Heart left ventricle (tissue), 16 donors: ENCODE measurements at regions of chr1 and their contacts with region 1.

Region 1: GRCh38 chr1:61825393-61825792 is 83.1 kb downstream of the PATJ start:
- DNase-seq: no peak
- ATAC-seq: no peak
- H3K4me3 ChIP-seq: no peak overlapping the region
- H3K27ac ChIP-seq: peak overlapping the region in 1 of 12 donors; percentile 21
- H3K4me1 ChIP-seq: no peaks in the 10 kb centered on the region
- H3K27me3 ChIP-seq: no peaks in the 10 kb centered on the region
- CTCF ChIP-seq: no peak
- POLR2A ChIP-seq: no peak

Region 2: GRCh38 chr1:61757945-61758344 is 67.4 kb before region 1 on chr1:
- intact Hi-C with region 1: loop called in 1 of 10 experiments (anchors 10 kb)
- DNase-seq: no peak
- ATAC-seq: no peak
- H3K4me3 ChIP-seq: no peak overlapping the region
- H3K27ac ChIP-seq: no peak overlapping the region
- H3K4me1 ChIP-seq: peaks cover 0 to 8% (median 0%) of the 10 kb centered on the region in 12 donors
- H3K27me3 ChIP-seq: no peaks in the 10 kb centered on the region
- CTCF ChIP-seq: no peak
- POLR2A ChIP-seq: no peak